ENCODE measurements at regions of chr6 and their contacts with region 1.

Region 1: DNA sequence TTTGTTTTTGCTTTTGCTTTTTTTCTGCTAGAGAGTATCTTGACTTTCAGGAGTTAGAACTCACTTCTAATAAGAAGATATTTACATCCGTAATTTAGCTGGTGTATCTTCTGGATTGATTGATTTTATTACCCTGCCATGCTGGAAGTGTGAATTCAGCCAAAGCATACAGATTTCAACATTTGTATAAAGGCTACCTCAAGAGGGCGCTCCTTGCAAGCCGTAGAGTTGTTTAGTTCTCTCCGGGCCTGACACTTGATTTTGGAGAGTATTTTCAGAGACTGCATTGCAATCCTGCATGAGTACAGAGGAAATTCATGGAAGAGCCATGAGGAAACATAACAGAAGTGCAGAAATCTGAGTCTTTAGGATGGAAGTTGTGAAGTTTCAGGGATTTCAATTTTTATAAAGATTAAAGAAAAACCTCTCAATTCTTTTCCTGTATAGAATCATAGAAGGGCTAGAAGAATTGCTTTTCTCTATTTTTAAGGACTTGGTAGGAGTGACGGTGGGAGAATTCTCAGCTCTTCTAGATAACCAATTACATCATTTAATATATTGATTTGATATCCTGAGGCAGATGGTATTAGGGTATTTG is 66.7 kb upstream of the TIAM2 start:
- DNase-seq: peak; percentile 80
- ATAC-seq: peak; percentile 77
- H3K4me3 Mint-ChIP-seq: no peak overlapping the region
- H3K27ac Mint-ChIP-seq: no peak overlapping the region
- H3K4me1 Mint-ChIP-seq: peaks cover 6% of the 10 kb centered on the region
- H3K27me3 Mint-ChIP-seq: no peaks in the 10 kb centered on the region

Region 2: GRCh38 chr6:154868143-154868594 is 60.3 kb before region 1 on chr6:
- CTCF ChIA-PET with region 1: interaction called, 14 read pairs
- POLR2A ChIA-PET with region 1: no interaction called
- DNase-seq: no peak
- ATAC-seq: no peak
- H3K4me3 Mint-ChIP-seq: no peak overlapping the region
- H3K27ac Mint-ChIP-seq: no peak overlapping the region
- H3K4me1 Mint-ChIP-seq: peaks cover 4% of the 10 kb centered on the region
- H3K27me3 Mint-ChIP-seq: no peaks in the 10 kb centered on the region

Region 3: GRCh38 chr6:154907293-154907692 is 21.1 kb before region 1 on chr6:
- CTCF ChIA-PET with region 1: interaction called, 12 read pairs
- POLR2A ChIA-PET with region 1: no interaction called
- DNase-seq: no peak
- ATAC-seq: no peak
- H3K4me3 Mint-ChIP-seq: no peak overlapping the region
- H3K27ac Mint-ChIP-seq: no peak overlapping the region
- H3K4me1 Mint-ChIP-seq: no peaks in the 10 kb centered on the region
- H3K27me3 Mint-ChIP-seq: no peaks in the 10 kb centered on the region

Region 4: DNA sequence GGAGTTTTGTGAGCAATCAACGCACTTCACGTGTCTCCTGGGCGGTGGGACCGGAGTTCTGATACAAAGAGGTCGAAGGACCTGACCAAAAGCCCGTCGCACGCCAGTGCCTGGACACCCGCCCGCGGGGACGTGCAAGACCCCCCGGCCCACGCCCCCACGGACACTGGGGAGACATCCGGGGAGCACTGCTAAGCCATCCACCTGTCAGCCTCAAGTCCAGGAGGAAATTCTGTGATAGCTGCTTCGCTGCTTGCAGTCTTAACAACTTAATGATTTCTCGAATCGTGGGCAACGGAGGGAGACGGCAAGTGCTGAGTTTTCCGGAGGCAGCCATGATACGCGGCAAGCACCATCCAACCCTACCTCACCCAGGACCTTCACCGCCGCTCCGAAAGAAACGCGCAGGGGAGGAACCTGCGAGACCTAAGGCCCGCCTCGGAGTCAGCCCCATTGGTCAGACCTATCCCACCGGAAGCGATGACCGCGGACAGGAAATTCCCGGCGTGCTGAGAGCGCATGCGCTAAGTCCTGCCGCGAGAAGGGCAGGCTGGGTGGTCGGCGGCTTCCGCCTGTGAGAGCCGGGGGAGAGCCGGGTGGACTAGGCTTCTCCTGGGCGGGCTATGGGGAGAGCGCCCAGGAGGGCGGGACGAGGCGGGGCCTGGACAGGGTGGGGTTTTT is 385.8 kb after region 1 on chr6 and contains the start of gene TFB1M:
- CTCF ChIA-PET with region 1: interaction called, 16 read pairs
- POLR2A ChIA-PET with region 1: interaction called, 3 read pairs
- DNase-seq: peak; percentile 99
- ATAC-seq: peak; percentile 97
- H3K4me3 Mint-ChIP-seq: peak within 1 kb of the TSS; percentile 98
- H3K27ac Mint-ChIP-seq: peak within 1 kb of the TSS; percentile 97
- H3K4me1 Mint-ChIP-seq: peaks cover 35% of the 10 kb centered on the region
- H3K27me3 Mint-ChIP-seq: peaks cover 5% of the 10 kb centered on the region
- total RNA-seq, gene TFB1M: 34.9 to 35.1 TPM

Region 5: DNA sequence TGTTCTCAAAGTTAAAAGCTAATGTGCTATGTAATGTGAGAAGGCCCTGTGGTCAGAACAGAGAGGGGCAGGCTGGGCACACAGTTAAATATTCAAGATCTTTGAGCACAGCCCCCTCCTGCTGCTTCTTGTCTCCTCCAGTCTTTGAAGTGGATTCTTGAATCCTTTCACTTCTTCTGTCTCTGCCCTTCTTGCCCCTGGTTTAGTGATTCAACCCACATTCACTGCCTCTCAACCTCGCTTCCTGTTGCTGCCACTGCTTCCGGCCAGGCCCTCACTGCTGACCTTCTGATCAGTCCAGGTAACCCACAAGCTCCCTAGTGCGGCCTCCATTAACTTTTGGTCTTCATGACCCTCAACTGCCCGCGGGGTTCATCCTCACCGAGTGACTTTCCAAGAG is 944.5 kb after region 1 on chr6:
- CTCF ChIA-PET with region 1: no interaction called
- POLR2A ChIA-PET with region 1: no interaction called
- DNase-seq: no peak
- ATAC-seq: no peak
- H3K4me3 Mint-ChIP-seq: no peak overlapping the region
- H3K27ac Mint-ChIP-seq: no peak overlapping the region
- H3K4me1 Mint-ChIP-seq: peaks cover 5% of the 10 kb centered on the region
- H3K27me3 Mint-ChIP-seq: no peaks in the 10 kb centered on the region